PC-3 (cell line): ENCODE measurements at regions of chr11 and their contacts with region 1.

Region 1: GRCh38 chr11:20035701-20036620 is 124.3 kb downstream of the DBX1 start:
- DNase-seq: peak; percentile 95
- ATAC-seq: peak; percentile 94
- H3K4me3 ChIP-seq: no peak overlapping the region
- H3K27ac ChIP-seq: peak overlapping the region; percentile 91
- H3K4me1 ChIP-seq: peaks cover 36% of the 10 kb centered on the region
- H3K27me3 ChIP-seq: no peaks in the 10 kb centered on the region
- CTCF ChIP-seq: peak; percentile 31; the same call in 1 of the 2 replicates

Region 2: GRCh38 chr11:20070459-20070858 is 34.5 kb after region 1 on chr11:
- CTCF ChIA-PET with region 1: no interaction called
- POLR2A ChIA-PET with region 1: no interaction called
- intact Hi-C with region 1: loop called (anchors 5 kb)
- DNase-seq: peak; percentile 30
- ATAC-seq: peak; percentile 88
- H3K4me3 ChIP-seq: no peak overlapping the region
- H3K27ac ChIP-seq: peak overlapping the region; percentile 44
- H3K4me1 ChIP-seq: peaks cover 4% of the 10 kb centered on the region; the same call in 1 of the 2 replicates
- H3K27me3 ChIP-seq: no peaks in the 10 kb centered on the region
- CTCF ChIP-seq: no peak

Region 3: DNA sequence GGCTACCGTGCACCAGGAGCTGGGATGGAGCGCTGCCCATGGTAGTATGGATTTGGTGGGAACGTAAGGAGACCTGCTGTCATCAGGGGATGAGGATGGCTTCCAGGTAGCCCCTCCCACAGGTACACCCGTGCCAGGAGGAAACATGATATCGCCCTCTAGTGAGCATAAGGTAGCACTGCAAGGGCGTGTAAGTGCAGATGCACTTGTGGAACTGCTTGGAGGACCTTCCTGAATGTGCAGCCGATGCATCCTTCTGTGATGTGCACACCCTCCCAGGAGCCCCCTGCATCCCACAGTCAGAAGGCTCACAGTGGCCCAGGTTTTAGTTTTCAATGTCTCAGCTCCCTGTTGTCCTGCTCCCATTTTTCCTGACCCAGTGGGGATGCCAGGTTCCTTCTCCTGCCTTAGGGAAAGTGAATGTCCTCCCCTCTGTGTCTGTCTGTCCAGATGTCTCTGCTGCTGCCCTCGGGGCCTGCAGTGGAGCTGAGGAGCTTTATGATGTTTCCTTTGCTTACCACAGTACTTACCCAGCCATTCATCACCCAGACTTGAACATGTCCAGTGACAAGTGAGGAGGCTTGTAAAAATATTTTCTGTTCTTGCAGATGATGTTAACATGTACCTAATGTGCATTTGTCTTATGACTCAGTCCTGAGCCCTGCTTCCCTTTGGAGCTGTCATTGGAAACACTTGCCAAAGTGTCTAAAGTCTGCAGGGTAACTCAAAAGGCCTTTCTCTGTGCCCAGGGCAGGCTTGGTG is 75.1 kb after region 1 on chr11:
- CTCF ChIA-PET with region 1: interaction called, 12 read pairs
- POLR2A ChIA-PET with region 1: no interaction called
- intact Hi-C with region 1: loop called (anchors 10 kb)
- DNase-seq: peak; percentile 90
- ATAC-seq: peak; percentile 77
- H3K4me3 ChIP-seq: no peak overlapping the region
- H3K27ac ChIP-seq: peak overlapping the region; percentile 97
- H3K4me1 ChIP-seq: peaks cover 35% of the 10 kb centered on the region
- H3K27me3 ChIP-seq: no peaks in the 10 kb centered on the region
- CTCF ChIP-seq: peak; percentile 91

Region 4: GRCh38 chr11:20127671-20128527 is 91.9 kb after region 1 on chr11:
- CTCF ChIA-PET with region 1: no interaction called
- POLR2A ChIA-PET with region 1: no interaction called
- intact Hi-C with region 1: no loop called
- DNase-seq: peak; percentile 78
- ATAC-seq: peak; percentile 64
- H3K4me3 ChIP-seq: no peak overlapping the region
- H3K27ac ChIP-seq: no peak overlapping the region
- H3K4me1 ChIP-seq: peaks cover 26% of the 10 kb centered on the region
- H3K27me3 ChIP-seq: no peaks in the 10 kb centered on the region
- CTCF ChIP-seq: peak; percentile 85